Mammary epithelial cell (primary cell): ENCODE measurements at regions of chr4 and their contacts with region 1.

Region 1: DNA sequence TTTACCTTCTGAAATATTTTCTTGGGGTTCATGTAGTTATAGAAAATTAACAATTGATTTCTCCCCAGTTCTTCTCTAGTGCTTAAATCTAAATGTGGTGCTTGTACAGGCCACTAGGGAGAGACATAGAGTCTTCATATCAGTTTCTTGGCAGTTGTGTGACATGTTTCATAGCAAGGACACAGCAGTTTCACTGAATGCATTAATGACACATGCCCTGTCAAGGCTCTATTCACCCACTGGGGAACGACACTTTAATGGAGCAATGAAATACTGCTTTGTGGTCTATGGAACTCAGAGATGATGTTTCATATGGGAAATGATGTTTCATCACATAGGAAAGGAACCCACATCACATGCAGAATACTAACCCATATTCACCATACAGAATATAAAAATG is 2.8 kb downstream of the VEGFC start:
- DNase-seq: peak; percentile 80
- H3K4me3 ChIP-seq: peak overlapping the region in 2 of 3 experiments; percentile 81 to 94
- H3K27ac ChIP-seq: peak overlapping the region; percentile 73
- H3K4me1 ChIP-seq: peaks cover 25% of the 10 kb centered on the region
- H3K27me3 ChIP-seq: no peaks in the 10 kb centered on the region
- CTCF ChIP-seq: peak; percentile 74 to 89

Region 2: DNA sequence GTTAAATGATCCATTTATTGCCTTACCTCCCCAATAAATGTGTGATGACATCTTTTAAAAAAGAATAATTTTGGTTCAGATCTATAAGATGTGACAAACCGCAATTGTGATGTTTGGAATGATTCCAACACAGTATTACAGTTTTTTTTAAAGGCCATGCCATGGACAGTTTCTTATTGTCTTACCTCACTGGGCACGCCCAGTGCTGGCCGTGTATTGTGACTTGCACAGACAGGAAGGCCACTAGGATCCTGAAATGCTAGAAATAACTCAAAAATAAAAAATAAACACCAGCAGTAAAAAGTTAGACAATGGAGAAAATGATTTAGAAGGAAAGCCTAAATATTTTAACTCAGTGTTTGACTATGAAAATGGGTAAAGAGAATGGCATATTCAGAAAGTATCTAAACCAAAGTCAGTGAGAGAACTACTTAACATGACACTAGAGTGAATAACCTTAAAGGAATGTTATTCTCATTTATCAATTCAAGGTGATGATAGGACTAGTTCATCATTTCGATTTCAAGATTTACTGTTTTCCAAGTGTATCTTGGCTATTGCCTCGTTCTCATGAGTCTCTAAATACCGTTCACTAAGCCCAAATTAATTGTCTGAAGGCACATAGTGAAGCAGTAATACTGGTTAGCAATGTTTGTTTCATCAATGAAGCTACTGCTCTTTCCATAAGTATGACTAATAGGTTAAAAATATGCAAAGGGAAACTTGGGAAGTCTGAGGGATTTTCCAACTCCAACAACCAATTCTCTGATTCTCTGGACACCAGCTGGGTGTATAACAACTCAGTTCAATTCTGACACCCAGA is 48.9 kb after region 1 on chr4:
- CTCF ChIA-PET with region 1: no interaction called
- dilution Hi-C with region 1: no loop called
- in situ Hi-C with region 1: no loop called
- intact Hi-C with region 1: loop called (anchors 2 kb)
- DNase-seq: peak; percentile 80
- H3K4me3 ChIP-seq: no peak overlapping the region
- H3K27ac ChIP-seq: peak overlapping the region; percentile 31
- H3K4me1 ChIP-seq: peaks cover 28% of the 10 kb centered on the region
- H3K27me3 ChIP-seq: no peaks in the 10 kb centered on the region
- CTCF ChIP-seq: no peak

Region 3: DNA sequence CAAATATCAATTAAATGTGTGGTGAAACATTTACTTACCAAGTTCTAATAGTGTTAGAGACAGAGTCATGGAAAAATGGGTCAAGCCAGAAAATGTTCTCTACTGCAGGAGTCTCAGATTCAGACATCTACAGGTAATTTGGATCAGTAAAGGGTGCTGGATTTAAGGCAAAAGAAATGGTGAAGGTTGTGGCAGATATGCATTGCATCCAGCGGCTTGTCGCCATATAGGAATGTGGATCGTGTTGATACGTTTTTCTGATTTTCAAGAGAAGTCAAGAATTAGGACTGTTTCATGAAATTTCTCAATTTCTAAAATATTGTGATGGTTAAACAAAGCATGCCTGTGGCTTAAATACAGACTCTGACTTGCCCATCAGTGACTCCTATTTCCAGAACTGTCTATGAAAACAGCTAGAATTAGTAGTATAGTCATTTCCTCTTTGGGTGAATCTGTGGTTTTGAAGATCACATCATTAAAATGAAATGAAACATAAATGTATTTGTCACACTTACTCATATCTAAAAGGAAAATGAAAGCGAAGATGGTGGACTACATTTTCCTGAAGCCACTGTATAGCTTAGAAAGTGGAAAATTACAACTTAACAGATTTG is 112.9 kb after region 1 on chr4:
- CTCF ChIA-PET with region 1: no interaction called
- dilution Hi-C with region 1: no loop called
- in situ Hi-C with region 1: no loop called
- intact Hi-C with region 1: loop called (anchors 2 kb)
- DNase-seq: peak; percentile 90
- H3K4me3 ChIP-seq: peak overlapping the region in 1 of 3 experiments; percentile 5
- H3K27ac ChIP-seq: peak overlapping the region; percentile 70
- H3K4me1 ChIP-seq: peaks cover 25% of the 10 kb centered on the region
- H3K27me3 ChIP-seq: no peaks in the 10 kb centered on the region
- CTCF ChIP-seq: no peak

Region 4: GRCh38 chr4:177005674-177006230 is 215.8 kb after region 1 on chr4:
- CTCF ChIA-PET with region 1: no interaction called
- dilution Hi-C with region 1: loop called (anchors 25 kb)
- in situ Hi-C with region 1: loop called in 1 of 2 experiments (anchors 25 kb)
- intact Hi-C with region 1: loop called (anchors 2 kb)
- DNase-seq: peak; percentile 95
- H3K4me3 ChIP-seq: no peak overlapping the region
- H3K27ac ChIP-seq: peak overlapping the region; percentile 100
- H3K4me1 ChIP-seq: peaks cover 50% of the 10 kb centered on the region
- H3K27me3 ChIP-seq: no peaks in the 10 kb centered on the region
- CTCF ChIP-seq: no peak

Region 5: DNA sequence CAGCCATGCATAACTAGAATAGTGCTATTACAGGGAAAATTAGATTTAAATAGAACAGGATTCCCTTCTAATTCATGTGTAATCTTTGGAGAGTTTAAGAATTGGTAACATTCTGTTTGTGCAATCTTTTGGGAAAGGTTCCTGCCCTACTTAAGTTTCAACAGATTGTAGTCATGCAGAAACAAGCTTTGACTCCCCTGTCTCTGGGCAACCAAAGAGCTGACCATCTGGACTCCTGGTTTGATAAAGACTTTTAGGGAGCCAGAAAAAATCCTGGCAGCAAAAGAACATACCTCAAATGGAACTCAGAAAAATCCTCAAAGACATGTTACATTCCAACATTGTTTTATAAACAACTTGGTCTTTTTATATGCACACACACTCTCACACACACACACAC is 328.6 kb after region 1 on chr4:
- CTCF ChIA-PET with region 1: no interaction called
- dilution Hi-C with region 1: no loop called
- in situ Hi-C with region 1: no loop called
- intact Hi-C with region 1: no loop called
- DNase-seq: peak; percentile 62
- H3K4me3 ChIP-seq: no peak overlapping the region
- H3K27ac ChIP-seq: no peak overlapping the region
- H3K4me1 ChIP-seq: peaks cover 1% of the 10 kb centered on the region
- H3K27me3 ChIP-seq: no peaks in the 10 kb centered on the region
- CTCF ChIP-seq: no peak

Region 6: DNA sequence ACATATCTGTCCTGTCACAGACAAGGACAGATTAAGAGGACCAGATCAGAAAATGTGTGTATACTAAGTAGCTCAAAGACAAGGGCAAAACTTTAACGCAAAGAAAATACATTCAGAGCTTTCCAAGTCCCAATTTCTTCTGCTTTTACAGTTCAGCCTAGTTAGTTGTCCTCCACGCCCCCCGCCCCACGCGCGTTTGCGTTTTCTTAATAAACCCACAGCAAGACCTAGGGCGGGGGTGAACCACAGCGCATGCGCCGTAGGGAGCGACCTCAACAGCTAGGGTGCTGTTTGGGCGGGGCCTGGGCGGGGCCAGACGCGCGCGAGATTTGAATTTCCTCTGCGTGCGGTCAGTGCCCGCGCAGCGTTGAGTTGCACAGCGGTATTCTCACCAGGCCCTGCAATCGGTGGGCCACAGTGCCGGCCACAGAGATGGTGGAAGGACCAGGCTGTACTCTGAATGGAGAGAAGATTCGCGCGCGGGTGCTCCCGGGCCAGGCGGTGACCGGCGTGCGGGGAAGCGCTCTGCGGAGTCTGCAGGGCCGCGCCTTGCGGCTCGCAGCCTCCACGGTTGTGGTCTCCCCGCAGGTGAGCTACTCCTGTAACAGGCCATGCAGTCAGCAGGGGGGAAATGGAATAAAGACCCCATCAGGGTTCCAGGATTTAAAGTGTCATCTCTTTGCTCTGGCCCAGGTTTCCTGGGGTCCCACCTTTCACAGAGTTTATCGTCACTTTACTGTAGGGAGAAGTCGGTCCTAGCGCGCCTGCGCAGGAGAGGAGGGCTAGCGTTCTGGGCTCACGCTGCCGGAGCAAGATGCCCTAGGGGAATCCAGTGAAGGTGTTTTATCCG is 519.8 kb after region 1 on chr4 and contains the start of gene NEIL3:
- CTCF ChIA-PET with region 1: no interaction called
- dilution Hi-C with region 1: no loop called
- in situ Hi-C with region 1: no loop called
- intact Hi-C with region 1: loop called (anchors 10 kb)
- DNase-seq: peak; percentile 82
- H3K4me3 ChIP-seq: peak within 1 kb of the TSS; percentile 80 to 91 (median 86)
- H3K27ac ChIP-seq: peak within 1 kb of the TSS; percentile 54
- H3K4me1 ChIP-seq: peaks cover 18% of the 10 kb centered on the region
- H3K27me3 ChIP-seq: no peaks in the 10 kb centered on the region
- CTCF ChIP-seq: no peak
- total RNA-seq, gene NEIL3: 1.2 to 7.5 TPM